AG04449 (cell line): ENCODE measurements at regions of chr11 and their contacts with region 1.

Region 1: GRCh38 chr11:72040726-72041441 is 39.5 kb downstream of the NUMA1 start:
- DNase-seq: peak; percentile 77
- H3K4me3 ChIP-seq: peak overlapping the region; percentile 63
- CTCF ChIP-seq: no peak

Region 2: GRCh38 chr11:72058416-72059034 is 17.6 kb after region 1 on chr11:
- CTCF ChIA-PET with region 1: interaction called, 35 read pairs
- POLR2A ChIA-PET with region 1: interaction called, 3 read pairs
- DNase-seq: peak; percentile 82
- H3K4me3 ChIP-seq: no peak overlapping the region
- CTCF ChIP-seq: no peak

Region 3: DNA sequence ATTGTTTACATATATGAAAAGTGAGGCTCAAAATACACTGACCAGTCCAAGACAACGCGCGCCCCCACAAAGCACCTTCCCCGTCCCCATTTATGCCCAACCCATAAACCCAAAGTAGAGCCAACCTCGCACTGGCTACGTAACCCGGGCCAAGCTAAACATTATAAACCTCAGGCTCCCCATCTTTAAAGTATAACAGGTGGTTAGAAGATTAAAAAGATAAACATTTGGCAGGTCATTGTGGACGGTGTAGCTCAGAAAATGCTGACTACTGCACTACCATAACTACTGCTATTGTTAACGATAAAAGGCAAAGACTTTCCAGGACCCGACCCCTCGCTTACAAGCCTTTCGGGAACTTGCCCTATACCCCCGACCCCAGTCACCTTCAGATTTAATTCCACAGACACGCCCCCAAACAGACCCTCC is 39.0 kb after region 1 on chr11:
- CTCF ChIA-PET with region 1: interaction called, 5 read pairs
- POLR2A ChIA-PET with region 1: interaction called, 12 read pairs
- DNase-seq: no peak
- H3K4me3 ChIP-seq: peak overlapping the region; percentile 71
- CTCF ChIP-seq: no peak